PC-9 (cell line): ENCODE measurements at regions of chr3 and their contacts with region 1.

Region 1: DNA sequence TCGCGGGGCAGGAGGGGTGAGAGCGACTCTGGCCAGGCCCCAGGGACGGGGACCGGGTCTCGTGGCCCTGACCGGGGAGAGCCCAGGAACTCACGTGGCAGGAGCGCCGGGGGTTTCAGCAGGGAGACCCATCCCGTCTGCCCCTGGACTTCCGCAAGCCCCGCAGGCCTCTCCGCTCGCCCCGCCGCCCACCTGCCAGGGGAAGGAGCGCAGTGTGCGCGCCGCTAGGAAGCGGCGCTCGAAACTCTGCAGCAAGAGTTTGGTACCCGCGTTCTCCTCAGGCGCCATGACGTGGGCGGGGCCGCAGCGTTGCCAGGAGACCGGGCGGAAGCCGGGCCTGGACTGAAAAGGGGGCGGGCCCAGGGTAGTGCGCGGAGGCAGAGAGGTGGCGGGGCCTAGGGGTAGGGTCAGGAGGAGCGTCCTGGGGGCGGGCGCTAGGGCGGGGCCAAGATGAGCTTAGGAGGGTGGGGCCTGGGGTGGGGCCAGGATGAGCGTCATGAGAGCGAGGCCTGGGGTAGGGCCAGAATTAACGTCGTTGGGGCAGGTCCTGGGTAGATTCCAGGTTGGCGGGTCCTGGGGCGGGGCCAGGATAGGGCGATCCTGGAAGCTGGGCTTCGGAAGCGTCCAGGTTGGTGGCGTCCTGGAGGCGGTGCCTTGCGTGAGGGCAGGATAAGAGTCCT is 29.7 kb downstream of the ALG1L2 start:
- DNase-seq: peak; percentile 89 to 99
- H3K4me3 ChIP-seq: peak overlapping the region; percentile 88
- H3K27ac ChIP-seq: peak overlapping the region; percentile 78
- H3K4me1 ChIP-seq: peaks cover 23% of the 10 kb centered on the region
- H3K27me3 ChIP-seq: no peaks in the 10 kb centered on the region
- CTCF ChIP-seq: no peak

Region 2: DNA sequence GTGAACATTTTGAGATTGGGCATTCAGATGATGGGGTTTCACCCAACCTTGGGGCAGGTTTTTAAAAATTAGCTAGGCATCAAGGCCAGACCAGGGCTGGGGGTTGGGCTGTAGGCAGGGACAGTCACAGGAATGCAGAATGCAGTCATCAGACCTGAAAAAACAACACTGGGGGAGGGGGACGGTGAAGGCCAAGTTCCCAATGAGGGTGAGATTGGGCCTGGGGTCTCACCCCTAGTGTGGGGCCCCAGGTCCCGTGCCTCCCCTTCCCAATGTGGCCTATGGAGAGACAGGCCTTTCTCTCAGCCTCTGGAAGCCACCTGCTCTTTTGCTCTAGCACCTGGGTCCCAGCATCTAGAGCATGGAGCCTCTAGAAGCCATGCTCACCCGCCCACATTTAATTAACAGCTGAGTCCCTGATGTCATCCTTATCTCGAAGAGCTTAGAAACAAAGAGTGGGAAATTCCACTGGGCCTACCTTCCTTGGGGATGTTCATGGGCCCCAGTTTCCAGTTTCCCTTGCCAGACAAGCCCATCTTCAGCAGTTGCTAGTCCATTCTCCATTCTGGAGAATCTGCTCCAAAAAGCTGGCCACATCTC is 576.8 kb before region 1 on chr3:
- CTCF ChIA-PET with region 1: no interaction called
- POLR2A ChIA-PET with region 1: interaction called, 12 read pairs
- intact Hi-C with region 1: no loop called
- DNase-seq: no peak
- H3K4me3 ChIP-seq: no peak overlapping the region
- H3K27ac ChIP-seq: peak overlapping the region; percentile 34
- H3K4me1 ChIP-seq: peaks cover 26% of the 10 kb centered on the region
- H3K27me3 ChIP-seq: no peaks in the 10 kb centered on the region
- CTCF ChIP-seq: no peak